ENCODE measurements at regions of chr18 and their contacts with region 1.

Region 1: GRCh38 chr18:70428439-70428838 is 139.6 kb downstream of the SOCS6 start:
- DNase-seq: peak; percentile 59
- CTCF ChIP-seq: no peak

Region 2: DNA sequence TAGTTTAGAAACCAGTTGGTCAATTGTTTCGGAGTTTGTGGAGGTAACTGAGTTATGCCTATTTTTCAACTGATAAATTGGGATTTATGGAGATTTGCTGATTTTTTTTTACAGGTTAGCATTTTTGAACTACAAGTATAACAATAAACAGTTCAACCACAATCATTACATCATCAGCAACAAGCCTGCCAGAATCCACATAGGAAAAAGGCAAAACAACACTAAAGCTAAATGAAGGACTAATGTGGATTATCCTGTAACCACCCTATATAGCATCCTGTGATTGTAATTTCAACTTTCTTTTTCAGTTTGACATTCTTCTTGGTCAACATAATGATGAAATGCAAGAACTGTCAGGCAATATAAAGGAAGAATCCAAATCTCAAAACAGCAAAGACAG is 1554.1 kb before region 1 on chr18:
- in situ Hi-C with region 1: loop called (anchors 25 kb)
- DNase-seq: no peak
- CTCF ChIP-seq: no peak

Region 3: GRCh38 chr18:72273025-72273424 is 1844.6 kb after region 1 on chr18:
- in situ Hi-C with region 1: no loop called
- DNase-seq: no peak
- CTCF ChIP-seq: no peak